Prostate gland (tissue), 2 donors: ENCODE measurements at regions of chr12 and their contacts with region 1.

Region 1: GRCh38 chr12:12319451-12320183 is 30.4 kb downstream of the MANSC1 start:
- DNase-seq: no peak
- H3K4me3 ChIP-seq: no peak overlapping the region
- H3K27ac ChIP-seq: peak overlapping the region; percentile 11 to 22
- H3K4me1 ChIP-seq: no peaks in the 10 kb centered on the region
- H3K27me3 ChIP-seq: no peaks in the 10 kb centered on the region
- CTCF ChIP-seq: no peak
- POLR2A ChIP-seq: no peak

Region 2: DNA sequence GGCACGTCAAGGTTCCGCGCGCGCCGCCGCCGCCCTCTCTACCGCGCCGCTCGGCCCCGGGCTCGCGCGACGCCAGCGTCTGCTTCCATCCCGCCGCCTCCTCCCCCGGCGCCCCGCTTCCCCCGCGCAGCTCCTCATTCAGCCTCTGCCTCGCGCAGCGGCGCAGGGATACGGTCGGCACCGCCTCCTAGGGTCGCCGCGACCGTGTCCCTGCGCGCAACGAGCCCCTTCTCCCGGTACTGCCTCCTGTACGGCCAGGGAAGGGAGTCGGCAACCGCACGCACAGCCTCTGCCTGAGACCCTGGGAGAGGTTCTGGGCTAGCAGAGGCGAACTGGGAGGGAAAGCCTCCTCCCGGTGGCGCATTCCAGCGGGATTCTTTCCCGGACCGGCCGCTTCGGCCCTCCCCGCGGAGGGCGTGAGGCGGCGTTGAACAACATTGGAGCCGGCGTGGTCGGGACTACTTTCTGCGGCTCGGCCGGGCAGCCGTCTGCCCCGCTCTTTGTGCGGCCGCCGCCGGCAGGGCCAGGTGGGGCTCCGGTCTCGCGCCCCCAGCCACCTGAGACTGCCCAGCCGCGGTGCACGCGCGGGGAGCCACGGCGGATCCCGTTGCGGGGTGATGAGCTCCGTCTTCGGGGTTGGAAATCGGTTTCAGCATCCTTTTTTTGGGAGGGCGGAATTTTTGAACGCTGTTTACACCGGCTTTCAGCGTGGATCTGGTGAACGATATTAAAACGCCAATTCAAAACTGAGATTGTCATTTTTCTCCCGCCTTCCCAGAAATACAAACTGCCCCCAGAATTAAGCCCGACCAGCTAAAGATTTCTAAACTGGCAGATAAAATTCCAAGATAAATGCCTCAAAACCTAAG is 52.5 kb before region 1 on chr12 and contains the start of gene LRP6:
- intact Hi-C with region 1: loop called (anchors 5 kb)
- DNase-seq: peak; percentile 88
- H3K4me3 ChIP-seq: peak within 1 kb of the TSS; percentile 69 to 86
- H3K27ac ChIP-seq: peak within 1 kb of the TSS; percentile 98 to 99
- H3K4me1 ChIP-seq: no peaks in the 10 kb centered on the region
- H3K27me3 ChIP-seq: no peaks in the 10 kb centered on the region
- CTCF ChIP-seq: peak in 1 of 4 experiments; percentile 8
- POLR2A ChIP-seq: peak; percentile 56
- total RNA-seq, gene LRP6: 23.0 to 34.7 TPM

Region 3: GRCh38 chr12:12282761-12283425 is 36.7 kb before region 1 on chr12:
- intact Hi-C with region 1: no loop called
- DNase-seq: no peak
- H3K4me3 ChIP-seq: no peak overlapping the region
- H3K27ac ChIP-seq: no peak overlapping the region
- H3K4me1 ChIP-seq: no peaks in the 10 kb centered on the region
- H3K27me3 ChIP-seq: no peaks in the 10 kb centered on the region
- CTCF ChIP-seq: no peak
- POLR2A ChIP-seq: no peak

Region 4: DNA sequence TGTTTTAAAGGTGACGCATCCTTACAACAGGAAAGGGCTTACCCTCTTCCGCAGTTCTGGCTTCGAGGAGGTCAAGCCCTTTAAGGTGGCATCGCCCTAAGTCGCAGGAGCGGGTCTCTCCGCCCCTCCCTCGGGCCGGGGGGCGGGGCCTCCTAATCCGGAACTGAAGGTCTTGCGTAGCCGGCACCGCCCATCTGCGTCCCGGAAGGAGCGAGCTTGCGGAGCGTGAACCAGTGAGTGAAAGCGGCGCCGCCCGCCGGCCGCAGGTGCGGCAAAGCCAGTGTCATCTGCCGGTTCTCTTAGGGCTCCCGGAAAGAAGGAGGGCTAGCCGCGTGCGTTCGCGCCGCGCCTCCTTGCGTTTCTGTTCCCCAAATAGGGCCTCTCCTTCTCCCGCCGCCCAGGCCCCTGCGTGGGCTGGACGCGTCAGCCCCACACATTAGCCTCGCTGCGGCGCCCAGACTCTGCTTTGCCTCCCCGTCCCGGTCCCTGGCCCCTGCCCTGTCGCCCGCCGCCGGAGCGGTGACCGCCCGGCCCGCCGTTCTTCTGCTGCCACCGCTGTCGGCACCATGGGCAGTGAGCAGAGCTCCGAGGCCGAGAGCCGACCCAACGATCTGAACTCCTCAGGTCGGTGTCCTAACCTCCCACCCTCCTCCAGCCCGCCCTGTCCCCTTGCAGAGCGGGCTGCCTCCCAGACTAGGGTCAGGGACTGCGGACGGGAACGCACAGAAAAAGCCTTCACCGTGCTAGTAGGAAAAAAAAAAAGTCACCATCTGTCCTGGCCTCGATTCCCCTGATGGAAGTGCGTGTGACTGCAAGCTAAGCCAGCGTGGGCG is 37.5 kb after region 1 on chr12 and contains the start of gene BORCS5:
- intact Hi-C with region 1: no loop called
- DNase-seq: peak; percentile 97
- H3K4me3 ChIP-seq: peak within 1 kb of the TSS; percentile 81 to 90
- H3K27ac ChIP-seq: peak within 1 kb of the TSS; percentile 97
- H3K4me1 ChIP-seq: no peaks in the 10 kb centered on the region
- H3K27me3 ChIP-seq: no peaks in the 10 kb centered on the region
- CTCF ChIP-seq: peak in 3 of 4 experiments; percentile 27 to 32 (median 31)
- POLR2A ChIP-seq: peak; percentile 98
- total RNA-seq, gene BORCS5: 9.7 to 26.8 TPM

Region 5: DNA sequence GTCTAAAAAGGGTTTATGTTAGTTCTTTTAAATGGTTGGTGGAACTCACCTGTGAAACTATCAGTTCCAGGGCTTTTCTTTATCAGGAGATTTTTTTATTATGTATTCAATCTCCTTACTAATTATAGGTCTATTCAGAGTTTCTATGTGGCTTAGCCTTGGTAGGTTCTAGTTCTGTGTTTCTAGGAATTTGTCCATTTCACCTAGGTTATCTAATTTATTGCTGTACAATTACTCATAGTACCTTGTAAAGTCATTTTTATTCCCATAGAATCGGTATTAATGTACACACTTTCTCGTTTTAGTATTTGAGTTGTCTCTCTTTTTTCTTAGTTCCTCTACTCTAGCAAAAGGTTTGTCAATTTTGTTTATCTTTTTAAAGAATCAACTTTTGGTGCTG is 96.3 kb after region 1 on chr12:
- intact Hi-C with region 1: no loop called
- DNase-seq: no peak
- H3K4me3 ChIP-seq: no peak overlapping the region
- H3K27ac ChIP-seq: no peak overlapping the region
- H3K4me1 ChIP-seq: no peaks in the 10 kb centered on the region
- H3K27me3 ChIP-seq: no peaks in the 10 kb centered on the region
- CTCF ChIP-seq: no peak
- POLR2A ChIP-seq: no peak

Region 6: DNA sequence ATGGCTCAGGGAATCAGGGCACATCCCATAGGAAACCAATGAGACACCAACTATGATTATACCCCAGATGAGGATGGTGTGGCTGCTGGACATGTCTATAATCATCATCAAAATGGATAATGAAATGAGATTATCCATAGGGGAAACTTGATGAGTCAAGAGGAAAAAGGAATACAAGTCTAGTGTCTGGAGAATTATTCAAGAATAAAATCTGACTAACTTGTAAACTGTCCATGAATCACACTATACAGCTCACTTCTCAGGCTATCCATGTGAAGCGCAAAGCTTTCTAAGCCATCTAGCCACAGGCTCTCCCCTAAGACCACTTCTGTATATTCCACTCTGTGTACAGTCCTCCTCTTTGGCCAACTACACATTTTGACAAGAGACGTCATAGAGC is 190.5 kb after region 1 on chr12:
- intact Hi-C with region 1: no loop called
- DNase-seq: no peak
- H3K4me3 ChIP-seq: no peak overlapping the region
- H3K27ac ChIP-seq: no peak overlapping the region
- H3K4me1 ChIP-seq: peaks cover 10% of the 10 kb centered on the region
- H3K27me3 ChIP-seq: no peaks in the 10 kb centered on the region
- CTCF ChIP-seq: no peak
- POLR2A ChIP-seq: no peak